Heart right ventricle (tissue), 16 donors: ENCODE measurements at regions of chr2 and their contacts with region 1.

Region 1: GRCh38 chr2:79369127-79369526 is 143.7 kb upstream of the CTNNA2 start:
- DNase-seq: no peak
- ATAC-seq: no peak
- H3K4me3 ChIP-seq: no peak overlapping the region
- H3K27ac ChIP-seq: no peak overlapping the region
- H3K4me1 ChIP-seq: no peaks in the 10 kb centered on the region
- H3K27me3 ChIP-seq: no peaks in the 10 kb centered on the region
- CTCF ChIP-seq: no peak

Region 2: GRCh38 chr2:79393806-79394484 is 24.8 kb after region 1 on chr2:
- intact Hi-C with region 1: loop called in 1 of 10 experiments (anchors 2 kb)
- DNase-seq: peak; percentile 4 to 7
- ATAC-seq: peak in 4 of 8 donors; percentile 33 to 87 (median 51)
- H3K4me3 ChIP-seq: no peak overlapping the region
- H3K27ac ChIP-seq: no peak overlapping the region
- H3K4me1 ChIP-seq: no peaks in the 10 kb centered on the region
- H3K27me3 ChIP-seq: no peaks in the 10 kb centered on the region
- CTCF ChIP-seq: no peak

Region 3: GRCh38 chr2:79530443-79530842 is 161.3 kb after region 1 on chr2:
- intact Hi-C with region 1: no loop called
- DNase-seq: no peak
- ATAC-seq: no peak
- H3K4me3 ChIP-seq: no peak overlapping the region
- H3K27ac ChIP-seq: no peak overlapping the region
- H3K4me1 ChIP-seq: no peaks in the 10 kb centered on the region
- H3K27me3 ChIP-seq: no peaks in the 10 kb centered on the region
- CTCF ChIP-seq: no peak